ENCODE measurements at regions of chr1 and their contacts with region 1.

Region 1: DNA sequence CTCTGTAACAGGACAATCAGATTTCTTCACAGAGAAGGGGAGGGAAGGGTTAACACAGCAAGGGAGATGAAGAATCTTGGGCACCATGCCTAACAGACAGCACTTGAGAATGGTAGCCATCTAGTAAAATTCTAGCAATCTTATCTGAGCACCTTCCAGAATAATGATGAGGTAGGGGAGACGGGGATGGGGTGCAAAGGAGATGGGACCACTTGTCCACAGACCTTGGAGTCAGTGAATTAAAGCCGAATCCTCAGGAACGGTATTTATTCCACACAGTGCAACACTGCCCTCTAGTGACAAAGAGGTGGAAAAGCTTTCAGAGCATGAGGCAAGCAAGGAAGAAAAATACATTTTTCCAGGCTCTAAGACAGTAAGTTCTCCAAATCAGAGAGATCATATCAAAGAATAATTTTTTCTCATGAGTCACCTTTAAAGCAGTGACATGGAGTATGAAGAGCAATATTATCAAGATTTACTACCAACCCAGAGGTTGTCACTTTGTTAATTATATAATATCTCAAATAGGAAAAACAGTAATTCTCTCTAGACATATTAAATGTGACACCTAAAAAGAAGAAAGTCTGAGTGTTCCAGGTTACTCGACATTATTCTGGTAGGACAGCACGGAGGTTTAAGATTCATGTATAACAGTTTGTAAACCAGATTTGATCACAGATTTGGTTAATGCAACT is 43.3 kb upstream of the LPAR3 start:
- DNase-seq: peak in 1 of 2 experiments; percentile 53
- H3K4me3 ChIP-seq: no peak overlapping the region
- H3K27ac ChIP-seq: no peak overlapping the region
- H3K4me1 ChIP-seq: no peaks in the 10 kb centered on the region
- H3K27me3 ChIP-seq: no peaks in the 10 kb centered on the region
- CTCF ChIP-seq: peak in 2 of 3 experiments; percentile 79 to 83; a peak in 3 of 4 replicates
- EP300 ChIP-seq: no peak
- POLR2A ChIP-seq: no peak
- RAD21 ChIP-seq: peak; percentile 95 to 97

Region 2: GRCh38 chr1:84892705-84893618 is 43.3 kb before region 1 on chr1 and contains the start of gene LPAR3:
- CTCF ChIA-PET with region 1: interaction called, 11 read pairs
- POLR2A ChIA-PET with region 1: no interaction called
- DNase-seq: peak in 1 of 2 experiments; percentile 85
- H3K4me3 ChIP-seq: peak within 1 kb of the TSS; percentile 58 to 78 (median 69)
- H3K27ac ChIP-seq: no peak within 1 kb of the TSS
- H3K4me1 ChIP-seq: peaks cover 0 to 23% (median 5%) of the 10 kb centered on the region in 4 experiments; a peak in 3 of 7 replicates
- H3K27me3 ChIP-seq: peaks cover 0 to 13% (median 7%) of the 10 kb centered on the region in 4 experiments; a peak in 5 of 7 replicates
- CTCF ChIP-seq: no peak
- EP300 ChIP-seq: no peak
- POLR2A ChIP-seq: peak in 1 of 2 experiments; percentile 57; a peak in 1 of 3 replicates
- RAD21 ChIP-seq: no peak; a peak in 1 of 4 replicates
- total RNA-seq, gene LPAR3: 25.4 and 26.8 TPM in 2 replicates

Measured in H1 (cell line).